ENCODE measurements at regions of chr20 and their contacts with region 1.

Region 1: DNA sequence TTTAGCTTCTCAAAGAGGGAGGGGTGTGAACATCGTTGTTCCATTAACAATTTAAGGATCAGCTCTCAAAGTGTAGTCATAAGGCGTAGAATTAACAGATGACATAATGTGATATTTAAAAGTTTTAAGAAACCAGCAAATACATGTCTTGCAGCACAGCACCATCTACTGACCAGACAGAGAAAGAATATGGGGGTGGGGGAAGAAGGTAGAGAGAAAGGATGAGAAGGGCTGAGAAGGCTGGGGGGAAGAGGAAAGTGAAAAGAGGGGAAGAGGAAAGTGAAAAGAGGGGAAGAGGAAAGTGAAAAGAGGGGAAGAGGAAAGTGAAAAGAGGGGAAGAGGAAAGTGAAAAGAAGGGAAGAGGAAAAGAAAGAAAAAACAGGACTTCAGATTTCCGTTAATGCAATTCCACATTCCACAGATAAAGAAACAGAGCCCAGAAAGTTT is 80.9 kb downstream of the HAO1 start:
- DNase-seq: no peak
- H3K4me3 ChIP-seq: no peak overlapping the region
- H3K27me3 ChIP-seq: no peaks in the 10 kb centered on the region; the same call in 1 of the 2 replicates
- CTCF ChIP-seq: peak; percentile 73

Region 2: DNA sequence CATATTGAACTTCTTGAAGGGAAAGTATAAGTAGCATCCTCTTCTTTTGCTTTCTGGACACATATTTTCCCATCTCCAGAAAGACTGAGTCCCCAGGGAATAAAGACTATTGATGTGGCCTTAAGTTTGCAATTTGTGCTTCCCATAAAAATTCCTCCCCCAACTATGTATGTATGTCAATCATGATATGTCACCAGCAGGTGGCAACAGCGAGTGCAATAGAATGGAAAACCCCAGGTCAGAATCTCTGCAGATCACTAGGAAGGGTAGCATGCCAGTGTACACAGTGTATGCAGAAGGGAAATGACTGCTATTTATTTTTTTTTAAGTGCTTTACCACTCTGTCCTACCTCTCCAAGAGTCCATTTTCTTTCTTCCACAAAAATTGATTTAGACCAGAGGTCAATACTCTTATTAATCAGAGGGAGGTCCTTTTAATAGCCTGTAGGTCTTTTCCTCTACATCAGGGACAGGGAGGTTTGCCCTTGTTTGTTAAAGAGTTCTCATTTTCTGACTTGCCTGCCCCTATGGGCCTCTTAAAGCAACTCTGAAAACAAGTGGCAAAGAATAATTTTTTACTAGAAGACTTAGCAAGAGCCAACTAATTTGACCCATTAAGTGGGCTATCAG is 1030.5 kb before region 1 on chr20:
- CTCF ChIA-PET with region 1: interaction called, 11 read pairs
- POLR2A ChIA-PET with region 1: no interaction called
- DNase-seq: peak; percentile 4
- H3K4me3 ChIP-seq: no peak overlapping the region
- H3K27me3 ChIP-seq: no peaks in the 10 kb centered on the region
- CTCF ChIP-seq: peak; percentile 73